Activated T-helper 1 cell treated with anti-CD3 and anti-CD28 coated beads, Interleukin-12 subunit alpha, Interleukin-12 subunit beta, Interleukin-2, Interleukin-4 antibody, amounts not matched to agents 30 ng/mL and 10 ng/mL and 1 ng/mL, durations not matched to agents 14 hours and 24 hours and 36 hours (primary cell): ENCODE measurements at regions of chr11 and their contacts with region 1.

Region 1: DNA sequence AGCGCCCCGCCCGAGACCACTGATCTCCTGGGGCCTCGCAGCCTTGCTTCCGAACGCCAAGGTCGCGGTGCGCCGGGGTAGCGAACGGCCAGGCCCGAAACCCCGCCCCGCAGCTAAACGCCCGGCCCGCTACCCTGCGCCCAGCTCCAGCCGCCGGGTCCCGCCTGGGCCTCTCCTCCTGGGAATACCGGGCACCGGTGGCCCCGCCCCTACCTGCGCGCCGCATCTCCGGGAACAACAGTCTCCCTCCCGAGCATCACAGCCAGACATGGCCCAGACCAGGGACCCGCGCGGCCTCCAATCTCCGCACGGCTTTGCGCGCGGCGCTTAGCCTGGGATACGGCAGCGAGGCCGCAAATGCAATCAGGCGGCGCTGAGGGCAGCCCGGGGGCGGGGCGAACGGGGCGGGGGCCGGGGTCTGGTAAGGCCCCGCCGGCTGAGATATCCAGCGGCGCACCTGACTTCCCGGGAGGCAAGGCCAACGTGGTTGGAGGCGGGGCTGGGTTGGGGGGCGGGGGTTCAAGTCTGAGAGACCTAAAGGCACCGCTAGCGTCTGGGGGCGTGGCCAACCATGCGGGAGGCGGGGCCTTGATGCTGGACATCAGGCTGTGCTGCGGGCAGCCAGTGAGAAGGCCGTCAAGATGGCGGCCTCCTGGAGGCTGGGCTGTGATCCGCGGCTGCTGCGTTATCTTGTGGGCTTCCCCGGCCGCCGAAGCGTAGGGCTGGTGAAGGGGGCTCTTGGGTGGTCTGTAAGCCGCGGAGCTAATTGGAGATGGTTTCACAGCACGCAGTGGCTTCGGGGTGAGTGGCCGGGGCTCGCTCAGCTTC is at the starts of genes APIP and PDHX:
- DNase-seq: peak; percentile 90
- H3K4me3 Mint-ChIP-seq: peak within 1 kb of the TSS; percentile 98
- H3K27ac Mint-ChIP-seq: peak within 1 kb of the TSS; percentile 91
- H3K4me1 Mint-ChIP-seq: peaks cover 42% of the 10 kb centered on the region
- H3K27me3 Mint-ChIP-seq: no peaks in the 10 kb centered on the region
- total RNA-seq, gene APIP: 26.3 and 26.8 TPM in 2 replicates
- total RNA-seq, gene PDHX: 32.0 TPM in 2 replicates

Region 2: GRCh38 chr11:33257897-33258630 is 1658.2 kb before region 1 on chr11:
- intact Hi-C with region 1: loop called (anchors 2 kb)
- DNase-seq: peak; percentile 72
- H3K4me3 Mint-ChIP-seq: peak overlapping the region; percentile 99
- H3K27ac Mint-ChIP-seq: peak overlapping the region; percentile 99
- H3K4me1 Mint-ChIP-seq: peaks cover 46% of the 10 kb centered on the region
- H3K27me3 Mint-ChIP-seq: peaks cover 2% of the 10 kb centered on the region

Region 3: DNA sequence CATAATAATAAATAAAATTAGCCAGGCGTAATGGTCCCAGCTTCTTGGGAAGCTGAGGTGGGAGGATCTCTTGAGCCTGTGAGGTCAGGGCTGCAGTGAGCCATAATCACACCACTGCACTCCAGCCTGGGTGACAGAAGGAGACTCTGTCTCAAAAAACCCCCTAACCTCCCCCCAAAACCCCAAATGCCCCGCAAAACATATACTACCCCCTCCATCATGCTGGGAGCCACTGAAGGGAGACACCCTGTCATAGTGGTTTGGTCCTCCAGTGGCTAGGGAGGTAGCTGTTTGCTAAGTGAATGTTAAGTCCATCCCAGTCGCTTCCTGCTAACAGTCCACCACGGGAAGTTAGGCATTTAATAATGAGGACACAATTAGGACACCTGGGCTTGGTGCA is 683.4 kb before region 1 on chr11:
- intact Hi-C with region 1: no loop called
- DNase-seq: no peak
- H3K4me3 Mint-ChIP-seq: no peak overlapping the region
- H3K27ac Mint-ChIP-seq: peak overlapping the region; percentile 52
- H3K4me1 Mint-ChIP-seq: peaks cover 52% of the 10 kb centered on the region
- H3K27me3 Mint-ChIP-seq: peaks cover 5% of the 10 kb centered on the region

Region 4: GRCh38 chr11:34243726-34244464 is 672.3 kb before region 1 on chr11:
- intact Hi-C with region 1: loop called (anchors 5 kb)
- DNase-seq: peak; percentile 36
- H3K4me3 Mint-ChIP-seq: peak overlapping the region; percentile 65
- H3K27ac Mint-ChIP-seq: peak overlapping the region; percentile 71
- H3K4me1 Mint-ChIP-seq: peaks cover 94% of the 10 kb centered on the region
- H3K27me3 Mint-ChIP-seq: peaks cover 11% of the 10 kb centered on the region

Region 5: DNA sequence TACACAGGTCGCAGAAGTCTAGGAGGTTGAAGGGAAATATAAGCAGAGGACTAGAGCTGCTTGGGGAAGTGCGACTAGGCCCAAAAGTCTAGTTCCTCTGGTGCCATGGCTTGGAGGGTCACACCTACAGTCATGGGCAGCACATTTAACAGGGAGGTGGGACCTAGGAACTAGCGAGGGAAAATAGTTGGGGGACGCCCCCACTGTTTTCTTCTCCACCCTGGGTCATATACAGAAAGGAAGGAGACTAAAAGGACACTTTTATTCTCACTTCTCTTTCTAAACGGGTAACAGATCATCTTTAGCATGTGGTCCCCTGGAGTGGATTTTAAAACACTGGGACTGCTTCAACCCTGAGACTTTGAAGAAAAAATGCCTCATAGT is 16.6 kb before region 1 on chr11:
- intact Hi-C with region 1: no loop called
- DNase-seq: no peak
- H3K4me3 Mint-ChIP-seq: no peak overlapping the region
- H3K27ac Mint-ChIP-seq: no peak overlapping the region
- H3K4me1 Mint-ChIP-seq: no peaks in the 10 kb centered on the region
- H3K27me3 Mint-ChIP-seq: no peaks in the 10 kb centered on the region

Region 6: DNA sequence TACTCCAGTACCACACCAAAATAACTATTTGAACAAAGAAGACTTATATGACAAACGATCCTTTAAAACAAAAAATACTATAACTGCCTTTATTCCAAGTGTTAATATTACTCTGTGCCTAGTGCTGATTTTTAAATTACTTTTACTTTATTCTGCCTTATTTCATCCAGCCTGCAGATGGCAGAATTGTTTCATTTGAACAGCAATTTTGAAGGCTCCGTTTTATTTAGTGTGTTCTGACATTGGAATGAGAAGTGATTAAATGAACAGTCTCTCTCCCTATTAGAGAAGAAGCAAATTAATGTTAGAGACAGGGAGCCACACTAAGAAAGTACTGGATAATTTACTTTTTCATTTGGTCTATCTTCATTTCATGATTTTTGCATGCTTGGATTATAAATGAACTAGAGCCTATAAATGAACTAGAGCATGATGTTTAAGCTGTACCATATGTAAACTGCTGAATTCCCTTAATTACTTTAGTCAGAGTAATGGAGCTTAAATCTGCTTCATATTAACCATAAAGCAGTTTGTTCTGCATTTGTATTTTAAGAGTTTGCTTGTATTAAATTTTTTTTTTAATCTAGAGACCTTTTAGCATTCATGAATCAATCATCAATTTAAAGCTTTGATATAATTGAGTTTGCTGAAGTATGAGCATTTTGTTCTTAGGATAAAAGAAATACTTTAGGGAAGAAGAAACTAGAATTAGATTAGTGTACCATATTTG is 10.0 kb after region 1 on chr11:
- intact Hi-C with region 1: loop called (anchors 1 kb)
- DNase-seq: no peak
- H3K4me3 Mint-ChIP-seq: no peak overlapping the region
- H3K27ac Mint-ChIP-seq: no peak overlapping the region
- H3K4me1 Mint-ChIP-seq: peaks cover 7% of the 10 kb centered on the region
- H3K27me3 Mint-ChIP-seq: no peaks in the 10 kb centered on the region

Region 7: GRCh38 chr11:35126000-35126878 is 210.0 kb after region 1 on chr11:
- intact Hi-C with region 1: loop called (anchors 5 kb)
- DNase-seq: no peak
- H3K4me3 Mint-ChIP-seq: peak overlapping the region; percentile 64
- H3K27ac Mint-ChIP-seq: peak overlapping the region; percentile 84
- H3K4me1 Mint-ChIP-seq: peaks cover 58% of the 10 kb centered on the region
- H3K27me3 Mint-ChIP-seq: no peaks in the 10 kb centered on the region

Region 8: GRCh38 chr11:35272391-35272902 is 356.2 kb after region 1 on chr11:
- intact Hi-C with region 1: loop called (anchors 1 kb)
- DNase-seq: peak; percentile 54
- H3K4me3 Mint-ChIP-seq: peak overlapping the region; percentile 3
- H3K27ac Mint-ChIP-seq: peak overlapping the region; percentile 86
- H3K4me1 Mint-ChIP-seq: peaks cover 61% of the 10 kb centered on the region
- H3K27me3 Mint-ChIP-seq: peaks cover 12% of the 10 kb centered on the region

Region 9: GRCh38 chr11:36376888-36377758 is 1460.9 kb after region 1 on chr11:
- intact Hi-C with region 1: loop called (anchors 5 kb)
- DNase-seq: peak; percentile 63
- H3K4me3 Mint-ChIP-seq: peak overlapping the region; percentile 97
- H3K27ac Mint-ChIP-seq: peak overlapping the region; percentile 88
- H3K4me1 Mint-ChIP-seq: peaks cover 61% of the 10 kb centered on the region
- H3K27me3 Mint-ChIP-seq: peaks cover 33% of the 10 kb centered on the region